ENCODE measurements at regions of chr6 and their contacts with region 1.

Region 1: DNA sequence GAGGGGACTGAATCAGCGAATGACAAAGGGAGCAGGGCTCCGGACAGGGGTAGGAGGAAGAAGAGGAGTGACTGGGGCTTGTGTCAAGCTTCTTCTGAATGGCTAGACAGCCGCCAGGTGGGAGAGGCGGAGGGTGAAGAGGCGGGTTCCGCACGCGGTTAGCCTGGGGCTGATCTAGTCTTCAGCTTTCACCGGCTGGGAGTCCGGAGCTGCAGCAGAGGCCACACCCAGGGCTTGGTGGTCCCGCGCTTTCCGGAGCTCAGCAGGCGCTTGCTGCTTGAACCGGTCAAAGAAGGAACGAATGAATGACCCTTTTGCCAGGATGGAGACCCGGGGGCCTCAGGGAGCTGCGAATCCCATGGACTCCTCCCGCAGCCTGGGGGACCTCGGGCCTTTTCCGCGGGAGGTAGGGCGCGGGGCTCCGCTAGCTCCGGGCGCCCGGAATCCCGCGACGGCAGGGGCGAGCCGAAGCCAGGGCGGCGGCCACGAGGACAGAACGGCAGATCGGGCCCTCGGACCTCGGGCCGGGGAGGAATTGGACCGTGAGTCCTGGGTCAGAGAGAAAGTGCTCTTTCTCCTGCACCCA is at the start of gene C6orf141:
- DNase-seq: peak; percentile 85
- H3K4me3 ChIP-seq: peak within 1 kb of the TSS; percentile 88 to 93 (median 89)
- H3K27ac ChIP-seq: peak within 1 kb of the TSS; percentile 69
- H3K4me1 ChIP-seq: peaks cover 11% of the 10 kb centered on the region
- H3K27me3 ChIP-seq: no peaks in the 10 kb centered on the region
- CTCF ChIP-seq: peak in 1 of 2 donors; percentile 13
- total RNA-seq, gene C6orf141: 22.7 to 39.8 TPM

Region 2: GRCh38 chr6:49606696-49607390 is 56.3 kb after region 1 on chr6:
- CTCF ChIA-PET with region 1: no interaction called
- dilution Hi-C with region 1: no loop called
- in situ Hi-C with region 1: loop called in 1 of 2 experiments (anchors 10 kb)
- intact Hi-C with region 1: loop called (anchors 1 kb)
- DNase-seq: peak; percentile 70
- H3K4me3 ChIP-seq: no peak overlapping the region
- H3K27ac ChIP-seq: no peak overlapping the region
- H3K4me1 ChIP-seq: peaks cover 2% of the 10 kb centered on the region
- H3K27me3 ChIP-seq: no peaks in the 10 kb centered on the region
- CTCF ChIP-seq: peak; percentile 83 to 84